Ascending aorta (tissue), 2 donors: ENCODE measurements at regions of chr16 and their contacts with region 1.

Region 1: DNA sequence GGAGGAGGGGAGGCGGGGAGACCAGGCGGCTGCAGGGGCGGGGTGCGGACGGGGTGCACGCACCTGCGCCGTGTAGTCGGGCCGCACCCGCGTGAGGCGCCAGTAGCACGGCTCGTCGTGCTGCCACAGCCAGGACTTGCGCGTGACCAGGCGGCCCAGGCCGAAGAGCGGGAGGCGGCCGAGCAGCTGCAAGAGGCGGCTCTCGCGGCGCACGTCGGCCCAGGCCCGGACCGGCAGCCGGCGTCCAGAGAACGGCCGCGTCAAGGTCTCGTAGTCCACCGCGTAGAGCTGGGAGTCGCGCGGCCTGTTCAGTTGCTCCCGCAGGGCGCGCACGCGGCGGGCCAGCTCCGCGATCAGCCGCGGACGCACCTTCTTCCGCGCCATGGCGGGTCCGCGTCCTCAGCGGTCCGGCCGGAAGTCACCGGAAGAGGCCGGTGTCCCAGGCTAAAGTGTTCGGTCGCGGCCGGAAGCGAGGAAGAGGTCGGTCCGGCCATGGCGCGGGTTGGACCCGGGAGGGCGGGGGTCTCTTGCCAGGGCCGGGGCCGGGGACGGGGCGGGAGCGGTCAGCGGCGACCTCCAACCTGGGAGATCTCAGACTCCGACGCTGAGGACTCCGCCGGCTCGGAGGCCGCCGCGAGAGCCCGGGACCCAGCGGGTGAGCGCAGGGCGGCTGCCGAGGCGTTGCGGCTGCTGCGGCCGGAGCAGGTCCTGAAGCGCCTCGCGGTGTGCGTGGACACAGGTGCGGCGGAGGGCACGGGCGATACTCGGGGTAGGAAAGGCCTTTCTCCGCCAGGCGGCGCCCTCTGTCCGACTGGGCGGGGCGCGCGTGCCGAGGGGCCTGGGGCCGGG is at the starts of genes EME2 and MRPS34:
- DNase-seq: peak in 1 of 2 donors; percentile 88
- H3K4me3 ChIP-seq: peak within 1 kb of the TSS; percentile 98 to 99
- H3K27ac ChIP-seq: peak within 1 kb of the TSS; percentile 95
- H3K4me1 ChIP-seq: peaks cover 19 to 28% of the 10 kb centered on the region in 2 donors
- H3K27me3 ChIP-seq: no peaks in the 10 kb centered on the region
- CTCF ChIP-seq: peak; percentile 68 to 82 (median 75)
- total RNA-seq, gene EME2: 25.3 TPM
- total RNA-seq, gene MRPS34: 170 TPM

Region 2: GRCh38 chr16:1677802-1678496 is 95.0 kb before region 1 on chr16 and contains the start of gene JPT2:
- intact Hi-C with region 1: loop called (anchors 5 kb)
- DNase-seq: peak; percentile 85 to 97
- H3K4me3 ChIP-seq: peak within 1 kb of the TSS; percentile 70 to 90
- H3K27ac ChIP-seq: peak within 1 kb of the TSS; percentile 35 to 59
- H3K4me1 ChIP-seq: peaks cover 0 to 3% of the 10 kb centered on the region in 2 donors
- H3K27me3 ChIP-seq: no peaks in the 10 kb centered on the region
- CTCF ChIP-seq: no peak
- total RNA-seq, gene JPT2: 18.3 TPM